GM12878 (cell line): ENCODE measurements at regions of chr9 and their contacts with region 1.

Region 1: GRCh38 chr9:9998491-9999287 is 614.1 kb downstream of the PTPRD start:
- DNase-seq: no peak
- ATAC-seq: peak; percentile 70
- H3K4me3 ChIP-seq: no peak overlapping the region
- H3K27ac ChIP-seq: no peak overlapping the region
- H3K4me1 ChIP-seq: no peaks in the 10 kb centered on the region
- H3K27me3 ChIP-seq: no peaks in the 10 kb centered on the region
- CTCF ChIP-seq: peak in 2 of 3 experiments; percentile 20 to 33; a peak in 2 of 6 replicates
- EP300 ChIP-seq: no peak
- POLR2A ChIP-seq: no peak
- RAD21 ChIP-seq: no peak

Region 2: DNA sequence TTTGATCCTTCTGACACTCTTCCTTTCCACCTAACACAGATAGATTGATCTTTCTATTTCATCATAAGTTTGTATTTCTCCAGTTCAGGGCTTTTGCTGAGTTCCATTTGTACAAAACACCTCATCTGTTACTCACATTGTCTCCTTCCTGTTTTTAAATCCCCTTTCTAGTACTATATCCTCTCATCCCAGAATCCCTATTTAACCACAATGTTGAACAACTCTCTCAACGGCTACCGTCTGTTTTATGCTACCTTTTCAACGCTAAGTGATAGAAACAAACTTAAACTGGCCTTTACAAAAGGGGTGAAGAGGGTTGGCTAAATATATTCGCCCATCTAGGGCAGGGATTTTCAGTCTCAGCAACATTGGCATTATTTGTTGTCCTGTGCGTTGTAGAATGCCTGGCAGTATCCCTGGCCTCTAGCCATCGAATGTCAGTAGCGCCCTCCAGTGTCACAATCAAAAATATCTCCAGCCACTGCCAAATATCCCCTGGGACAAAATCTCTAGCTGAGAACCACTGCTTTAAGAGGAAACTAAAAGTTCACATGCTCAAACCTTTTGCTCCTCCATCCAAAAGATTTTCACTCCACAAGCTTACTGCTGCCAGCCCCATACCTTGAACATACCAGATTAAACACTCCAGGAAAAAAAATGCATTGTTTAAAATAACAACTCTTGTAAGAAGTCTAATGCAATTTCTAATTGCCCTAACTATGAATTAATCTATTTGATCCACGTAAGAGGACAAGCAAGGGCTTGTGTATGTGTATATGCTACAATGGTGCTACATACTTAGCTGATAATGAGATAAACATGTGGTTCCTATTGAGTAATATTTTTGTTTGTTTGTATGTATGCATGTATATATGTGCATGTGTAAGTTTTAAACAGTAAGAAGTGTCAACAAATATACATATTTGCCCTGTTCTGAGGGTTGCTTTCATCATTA is 270.1 kb after region 1 on chr9:
- CTCF ChIA-PET with region 1: no interaction called
- POLR2A ChIA-PET with region 1: no interaction called
- RAD21 ChIA-PET with region 1: no interaction called
- SMC1A ChIA-PET with region 1: no interaction called
- in situ Hi-C with region 1: no loop called
- intact Hi-C with region 1: loop called (anchors 5 kb)
- DNase-seq: no peak
- ATAC-seq: peak; percentile 77
- H3K4me3 ChIP-seq: no peak overlapping the region
- H3K27ac ChIP-seq: no peak overlapping the region
- H3K4me1 ChIP-seq: no peaks in the 10 kb centered on the region
- H3K27me3 ChIP-seq: no peaks in the 10 kb centered on the region
- CTCF ChIP-seq: peak; percentile 20 to 57 (median 50); a peak in 3 of 6 replicates
- EP300 ChIP-seq: no peak
- POLR2A ChIP-seq: no peak
- RAD21 ChIP-seq: peak; percentile 34; the same call in 1 of the 2 replicates